ENCODE measurements at regions of chr4 and their contacts with region 1.

Region 1: GRCh38 chr4:76213415-76214176 is at the start of gene SCARB2:
- DNase-seq: peak; percentile 92 to 97 (median 96)
- ATAC-seq: peak; percentile 97
- H3K4me3 ChIP-seq: peak within 1 kb of the TSS; percentile 79
- H3K27ac ChIP-seq: peak within 1 kb of the TSS; percentile 98
- H3K4me1 ChIP-seq: peaks cover 15% of the 10 kb centered on the region
- H3K27me3 ChIP-seq: no peaks in the 10 kb centered on the region
- total RNA-seq, gene SCARB2: 102 to 139 (median 105) TPM

Region 2: DNA sequence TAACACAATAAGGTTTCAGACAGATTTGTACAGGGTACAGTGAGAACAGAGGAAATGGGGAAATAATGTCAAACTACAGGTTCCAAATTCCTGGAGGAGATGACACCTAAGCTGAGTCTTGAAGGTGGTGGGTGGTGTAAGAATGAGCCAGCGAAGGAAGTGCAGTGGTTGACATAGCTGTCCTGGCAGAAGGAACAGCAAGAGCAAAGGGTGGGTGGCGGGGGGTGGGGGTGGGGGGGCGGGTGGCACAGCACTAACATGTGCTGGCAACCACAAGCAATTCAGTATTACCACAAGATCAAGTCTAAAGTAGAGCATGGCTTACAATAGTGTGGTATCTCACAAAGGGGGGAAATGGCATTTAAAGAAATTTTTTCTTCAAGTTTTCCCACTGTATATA is 527.2 kb before region 1 on chr4:
- intact Hi-C with region 1: no loop called
- DNase-seq: no peak
- ATAC-seq: no peak
- H3K4me3 ChIP-seq: no peak overlapping the region
- H3K27ac ChIP-seq: no peak overlapping the region
- H3K4me1 ChIP-seq: no peaks in the 10 kb centered on the region
- H3K27me3 ChIP-seq: no peaks in the 10 kb centered on the region

Region 3: GRCh38 chr4:75724066-75724866 is 489.3 kb before region 1 on chr4 and contains the start of gene USO1:
- intact Hi-C with region 1: no loop called
- DNase-seq: peak; percentile 99 to 100 (median 99)
- ATAC-seq: peak; percentile 99
- H3K4me3 ChIP-seq: peak within 1 kb of the TSS; percentile 75
- H3K27ac ChIP-seq: peak within 1 kb of the TSS; percentile 97
- H3K4me1 ChIP-seq: peaks cover 2% of the 10 kb centered on the region
- H3K27me3 ChIP-seq: no peaks in the 10 kb centered on the region
- total RNA-seq, gene USO1: 93.6 to 103 (median 99.1) TPM

Region 4: DNA sequence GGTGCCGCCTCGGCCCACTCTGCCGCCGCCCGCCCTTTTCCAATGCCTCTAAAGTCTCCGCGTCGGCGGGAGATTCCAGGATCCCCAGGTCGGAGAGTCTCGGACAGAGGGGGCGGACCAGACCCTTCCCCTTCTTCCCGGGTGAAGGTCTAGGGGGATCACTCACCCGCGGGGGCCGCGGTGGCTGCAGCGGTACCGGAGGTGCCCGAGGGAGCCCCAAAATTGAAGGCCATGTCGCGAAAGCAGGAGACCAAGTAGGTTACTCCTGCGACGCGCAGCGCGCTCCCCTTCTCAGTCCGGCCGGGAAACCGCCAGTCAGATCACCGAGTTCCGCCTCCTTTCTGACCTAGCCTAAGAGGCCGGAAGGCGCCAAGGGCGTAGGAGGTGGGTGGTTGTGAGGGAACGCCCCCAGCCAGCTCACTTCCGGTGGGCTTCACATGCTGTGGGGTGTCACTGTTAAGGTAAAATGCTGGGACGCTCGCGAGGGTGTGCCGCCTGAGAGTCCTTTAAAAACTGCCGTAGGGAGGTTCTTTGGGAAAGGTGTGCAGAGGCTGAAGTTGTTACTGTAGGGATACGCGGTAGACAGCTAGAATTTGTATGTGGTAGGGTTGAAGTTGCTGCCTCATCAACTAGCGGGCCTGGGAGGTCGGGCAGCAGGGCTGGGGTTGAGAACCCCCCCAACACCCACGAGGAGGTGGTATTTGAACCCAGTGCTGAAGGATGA is 65.3 kb before region 1 on chr4 and contains the start of gene NUP54:
- intact Hi-C with region 1: loop called in 1 of 4 experiments (anchors 2 kb)
- DNase-seq: peak; percentile 95 to 97 (median 97)
- ATAC-seq: peak; percentile 99 to 100
- H3K4me3 ChIP-seq: peak within 1 kb of the TSS; percentile 85
- H3K27ac ChIP-seq: peak within 1 kb of the TSS; percentile 74
- H3K4me1 ChIP-seq: no peaks in the 10 kb centered on the region
- H3K27me3 ChIP-seq: no peaks in the 10 kb centered on the region
- total RNA-seq, gene NUP54: 22.9 to 24.9 (median 23.5) TPM

Region 5: DNA sequence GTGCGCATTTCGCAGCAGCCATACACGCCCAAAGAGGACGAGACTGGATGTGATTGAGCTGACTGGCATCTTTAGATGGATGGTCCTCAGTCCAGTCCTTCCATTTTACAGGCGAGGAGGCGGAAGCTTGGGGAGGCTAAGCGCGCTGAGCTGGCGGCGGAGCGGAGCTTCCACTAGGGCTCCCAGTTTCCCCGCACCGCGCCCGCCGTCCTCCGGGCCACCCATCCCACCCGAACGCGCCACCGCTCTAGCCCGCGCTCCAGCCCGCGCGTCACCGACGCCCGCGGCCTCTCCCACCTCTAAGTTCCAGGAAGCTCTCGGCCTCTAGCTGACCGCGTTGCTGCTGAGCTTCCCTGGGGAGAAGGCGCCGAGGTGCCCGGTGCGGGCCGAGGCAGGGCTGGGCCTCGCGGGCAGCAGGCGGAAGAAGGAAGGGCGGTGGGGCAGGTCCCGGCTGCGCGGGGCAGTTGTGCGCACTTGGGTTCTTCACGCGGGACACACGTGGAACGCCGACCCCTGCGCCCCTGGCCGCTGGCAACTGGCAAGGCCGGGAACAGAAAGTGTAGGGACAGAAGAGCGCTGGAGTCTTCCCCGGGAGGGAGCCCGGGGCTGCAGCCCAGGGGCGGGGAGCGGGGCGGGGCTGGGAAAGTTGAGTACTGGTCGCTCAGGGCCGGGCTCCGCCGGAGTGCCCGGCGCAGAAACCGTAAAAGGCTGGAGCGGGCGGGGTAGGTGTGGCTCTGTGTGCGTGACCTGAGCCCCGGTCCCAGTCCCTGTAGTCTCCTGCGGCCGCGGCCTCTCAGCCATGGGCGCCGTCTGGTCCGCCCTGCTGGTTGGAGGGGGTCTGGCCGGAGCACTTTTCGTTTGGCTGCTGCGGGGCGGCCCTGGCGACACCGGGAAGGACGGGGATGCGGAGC is 92.6 kb after region 1 on chr4 and contains the start of gene STBD1:
- intact Hi-C with region 1: loop called in 1 of 4 experiments (anchors 10 kb)
- DNase-seq: peak; percentile 84 to 92 (median 92)
- ATAC-seq: peak; percentile 91 to 92
- H3K4me3 ChIP-seq: peak within 1 kb of the TSS; percentile 71
- H3K27ac ChIP-seq: peak within 1 kb of the TSS; percentile 72
- H3K4me1 ChIP-seq: peaks cover 9% of the 10 kb centered on the region
- H3K27me3 ChIP-seq: no peaks in the 10 kb centered on the region
- total RNA-seq, gene STBD1: 28.5 to 42.6 (median 31.3) TPM

Region 6: DNA sequence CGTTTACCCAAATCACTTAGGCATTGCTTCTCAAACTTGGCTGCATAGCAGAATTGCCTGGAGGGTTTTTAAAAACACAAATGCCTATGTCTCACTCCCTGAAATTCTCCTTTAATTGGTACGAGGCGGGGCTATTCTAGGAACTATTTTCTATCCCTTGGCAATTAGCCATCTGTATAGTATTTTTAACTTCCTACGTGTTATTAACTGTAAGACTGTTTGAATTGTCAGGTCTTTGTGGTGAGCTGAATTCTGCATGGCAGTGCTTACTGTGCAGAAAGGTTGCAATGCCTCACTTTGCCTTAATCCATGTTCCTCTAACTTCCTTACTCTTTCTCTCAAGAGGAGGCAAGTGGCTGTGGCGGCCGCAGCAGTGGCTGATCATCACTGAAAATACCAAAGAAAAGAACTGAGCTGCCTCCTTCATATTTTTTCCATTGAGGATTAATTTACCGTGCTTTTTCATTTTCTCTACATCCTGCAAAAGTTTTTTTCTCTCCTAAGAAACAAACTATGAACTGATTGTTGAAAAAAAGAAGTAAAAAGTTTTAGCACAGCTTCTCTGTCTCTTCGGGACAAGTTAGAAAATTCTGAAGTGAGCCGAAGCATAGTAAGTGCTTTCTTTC is 221.4 kb after region 1 on chr4 and contains the start of gene SHROOM3:
- intact Hi-C with region 1: no loop called
- DNase-seq: peak; percentile 25 to 63 (median 58)
- ATAC-seq: peak; percentile 52 to 71
- H3K4me3 ChIP-seq: peak within 1 kb of the TSS; percentile 72
- H3K27ac ChIP-seq: peak within 1 kb of the TSS; percentile 64
- H3K4me1 ChIP-seq: no peaks in the 10 kb centered on the region
- H3K27me3 ChIP-seq: no peaks in the 10 kb centered on the region
- total RNA-seq, gene SHROOM3: 10.8 to 11.8 (median 11.1) TPM